ENCODE measurements at regions of chr2 and their contacts with region 1.

Region 1: GRCh38 chr2:150487537-150488429 is at the start of gene RND3:
- DNase-seq: peak; percentile 91 to 98
- ATAC-seq: peak; percentile 72 to 84 (median 76)
- H3K4me3 ChIP-seq: peak within 1 kb of the TSS; percentile 51 to 91 (median 78)
- H3K27ac ChIP-seq: peak within 1 kb of the TSS; percentile 84 to 97 (median 95)
- H3K4me1 ChIP-seq: peaks cover 0 to 24% (median 19%) of the 10 kb centered on the region in 9 donors
- H3K27me3 ChIP-seq: peaks cover 0 to 38% (median 0%) of the 10 kb centered on the region in 7 donors
- CTCF ChIP-seq: peak; percentile 73 to 93 (median 84)
- total RNA-seq, gene RND3: 20.7 to 74.3 (median 41.0) TPM

Region 2: GRCh38 chr2:149597668-149598326 is 890.0 kb before region 1 on chr2:
- intact Hi-C with region 1: loop called in 8 of 10 experiments (anchors 2 to 5 kb)
- DNase-seq: peak in 1 of 2 donors; percentile 42
- ATAC-seq: peak; percentile 76 to 95 (median 92)
- H3K4me3 ChIP-seq: peak overlapping the region in 7 of 10 donors; percentile 8 to 38 (median 26)
- H3K27ac ChIP-seq: no peak overlapping the region
- H3K4me1 ChIP-seq: peaks cover 0 to 11% (median 0%) of the 10 kb centered on the region in 9 donors
- H3K27me3 ChIP-seq: no peaks in the 10 kb centered on the region
- CTCF ChIP-seq: peak; percentile 61 to 90 (median 81)

Region 3: DNA sequence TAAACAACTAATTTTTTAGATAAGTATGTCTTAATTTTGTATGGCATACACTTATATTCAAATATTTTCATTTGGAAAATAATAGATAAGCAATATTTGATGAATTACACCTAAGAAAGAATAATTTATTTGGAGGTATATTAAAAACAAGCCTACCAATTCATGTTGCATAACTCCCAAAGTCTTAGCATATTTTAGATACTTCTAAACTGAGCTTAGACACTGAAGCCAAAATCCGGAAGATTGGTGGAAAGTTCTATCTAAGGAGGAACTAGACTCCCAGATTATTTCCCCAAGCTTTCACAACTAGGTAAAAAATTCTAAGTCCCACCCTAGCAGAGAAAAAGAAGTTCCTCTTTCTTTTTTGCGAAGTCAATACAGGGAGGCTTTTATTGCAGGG is 679.2 kb before region 1 on chr2:
- intact Hi-C with region 1: loop called in 3 of 10 experiments (anchors 10 kb)
- DNase-seq: no peak
- ATAC-seq: no peak
- H3K4me3 ChIP-seq: no peak overlapping the region
- H3K27ac ChIP-seq: no peak overlapping the region
- H3K4me1 ChIP-seq: no peaks in the 10 kb centered on the region
- H3K27me3 ChIP-seq: no peaks in the 10 kb centered on the region
- CTCF ChIP-seq: no peak

Region 4: GRCh38 chr2:150280231-150280630 is 207.6 kb before region 1 on chr2:
- intact Hi-C with region 1: loop called in 2 of 10 experiments (anchors 5 to 10 kb)
- DNase-seq: peak in 1 of 2 donors; percentile 79
- ATAC-seq: peak; percentile 64 to 92 (median 84)
- H3K4me3 ChIP-seq: no peak overlapping the region
- H3K27ac ChIP-seq: peak overlapping the region in 8 of 10 donors; percentile 12 to 67 (median 38)
- H3K4me1 ChIP-seq: peaks cover 0 to 27% (median 6%) of the 10 kb centered on the region in 9 donors
- H3K27me3 ChIP-seq: no peaks in the 10 kb centered on the region
- CTCF ChIP-seq: no peak

Region 5: GRCh38 chr2:150449871-150450270 is 37.9 kb before region 1 on chr2:
- intact Hi-C with region 1: no loop called
- DNase-seq: no peak
- ATAC-seq: no peak
- H3K4me3 ChIP-seq: no peak overlapping the region
- H3K27ac ChIP-seq: no peak overlapping the region
- H3K4me1 ChIP-seq: no peaks in the 10 kb centered on the region
- H3K27me3 ChIP-seq: no peaks in the 10 kb centered on the region
- CTCF ChIP-seq: no peak

Region 6: GRCh38 chr2:150570712-150571111 is 82.9 kb after region 1 on chr2:
- intact Hi-C with region 1: no loop called
- DNase-seq: no peak
- ATAC-seq: no peak
- H3K4me3 ChIP-seq: no peak overlapping the region
- H3K27ac ChIP-seq: no peak overlapping the region
- H3K4me1 ChIP-seq: peaks cover 0 to 5% (median 0%) of the 10 kb centered on the region in 9 donors
- H3K27me3 ChIP-seq: no peaks in the 10 kb centered on the region
- CTCF ChIP-seq: no peak